ENCODE measurements at regions of chr3 and their contacts with region 1.

Region 1: DNA sequence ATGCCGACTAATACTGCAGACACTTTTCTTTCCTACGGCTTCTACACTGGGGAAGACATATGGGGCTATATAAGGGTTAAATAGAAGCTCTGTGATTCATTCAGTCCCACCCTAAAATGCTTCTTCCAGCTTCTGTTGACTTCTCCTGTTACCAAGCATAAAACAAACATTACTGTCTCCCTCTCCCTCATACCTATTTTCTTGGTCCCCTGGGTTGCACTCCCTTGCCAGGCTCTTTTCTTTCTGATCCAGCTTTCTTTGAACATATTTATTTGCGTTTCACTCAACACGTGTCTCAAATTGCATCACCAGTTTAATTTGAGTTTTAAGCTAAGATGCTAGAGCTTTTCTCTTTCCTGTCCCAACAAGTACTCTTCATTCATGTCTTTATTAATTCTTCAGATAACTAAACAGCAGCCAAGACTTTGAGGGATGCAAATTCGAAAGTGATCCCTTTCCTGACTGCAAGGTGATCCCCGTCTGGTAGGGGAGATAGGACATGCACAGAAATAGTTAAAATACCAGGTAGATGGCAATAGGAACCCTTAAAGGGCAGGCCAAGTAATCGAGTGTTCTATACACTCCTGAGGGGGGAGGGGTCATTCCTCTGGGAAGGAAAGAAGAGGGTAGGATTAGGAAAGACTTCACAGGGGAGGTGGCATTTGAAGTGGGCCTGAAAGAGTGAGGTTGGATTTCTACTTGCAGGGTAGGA is 198.6 kb upstream of the BCL6 start:
- DNase-seq: no peak
- ATAC-seq: no peak
- H3K4me3 ChIP-seq: no peak overlapping the region
- H3K27ac ChIP-seq: no peak overlapping the region
- H3K4me1 ChIP-seq: peaks cover 6% of the 10 kb centered on the region; the same call in 1 of the 2 replicates
- H3K27me3 ChIP-seq: peaks cover 14 to 22% of the 10 kb centered on the region in 2 experiments; a peak in 3 of 4 replicates
- CTCF ChIP-seq: no peak
- EP300 ChIP-seq: no peak
- POLR2A ChIP-seq: no peak
- RAD21 ChIP-seq: no peak

Region 2: GRCh38 chr3:187836823-187837770 is 106.7 kb before region 1 on chr3:
- CTCF ChIA-PET with region 1: no interaction called
- POLR2A ChIA-PET with region 1: no interaction called
- RAD21 ChIA-PET with region 1: no interaction called
- SMC1A ChIA-PET with region 1: no interaction called
- in situ Hi-C with region 1: no loop called
- intact Hi-C with region 1: no loop called
- DNase-seq: no peak
- ATAC-seq: no peak
- H3K4me3 ChIP-seq: no peak overlapping the region
- H3K27ac ChIP-seq: no peak overlapping the region
- H3K4me1 ChIP-seq: no peaks in the 10 kb centered on the region
- H3K27me3 ChIP-seq: peaks cover 0 to 4% of the 10 kb centered on the region in 2 experiments; a peak in 1 of 4 replicates
- CTCF ChIP-seq: no peak
- EP300 ChIP-seq: no peak
- POLR2A ChIP-seq: no peak
- RAD21 ChIP-seq: no peak

Region 3: GRCh38 chr3:187955076-187955952 is 11.5 kb after region 1 on chr3:
- CTCF ChIA-PET with region 1: interaction called, 4 read pairs
- POLR2A ChIA-PET with region 1: interaction called, 4 read pairs
- RAD21 ChIA-PET with region 1: no interaction called
- SMC1A ChIA-PET with region 1: interaction called, 22 read pairs
- in situ Hi-C with region 1: no loop called
- intact Hi-C with region 1: no loop called
- DNase-seq: no peak
- ATAC-seq: no peak
- H3K4me3 ChIP-seq: no peak overlapping the region
- H3K27ac ChIP-seq: no peak overlapping the region
- H3K4me1 ChIP-seq: peaks cover 6% of the 10 kb centered on the region
- H3K27me3 ChIP-seq: peaks cover 0 to 3% of the 10 kb centered on the region in 2 experiments; a peak in 3 of 4 replicates
- CTCF ChIP-seq: no peak
- EP300 ChIP-seq: no peak
- POLR2A ChIP-seq: no peak
- RAD21 ChIP-seq: no peak

Measured in GM12878 (cell line).